WTC11 (cell line): ENCODE measurements at regions of chr7 and their contacts with region 1.

Region 1: GRCh38 chr7:127792528-127793342 is 140.7 kb downstream of the SND1 start:
- DNase-seq: peak; percentile 84
- ATAC-seq: peak; percentile 93
- H3K4me3 Mint-ChIP-seq: no peak overlapping the region
- H3K27ac Mint-ChIP-seq: peak overlapping the region; percentile 13
- H3K4me1 Mint-ChIP-seq: peaks cover 47% of the 10 kb centered on the region
- H3K27me3 Mint-ChIP-seq: no peaks in the 10 kb centered on the region
- CTCF ChIP-seq: peak; percentile 78

Region 2: GRCh38 chr7:127651556-127652332 is 141.0 kb before region 1 on chr7 and contains the start of gene SND1:
- CTCF ChIA-PET with region 1: no interaction called
- POLR2A ChIA-PET with region 1: no interaction called
- DNase-seq: peak; percentile 99
- ATAC-seq: peak; percentile 93
- H3K4me3 Mint-ChIP-seq: peak within 1 kb of the TSS; percentile 100; the same call in 1 of the 2 replicates
- H3K27ac Mint-ChIP-seq: peak within 1 kb of the TSS; percentile 97
- H3K4me1 Mint-ChIP-seq: peaks cover 35% of the 10 kb centered on the region
- H3K27me3 Mint-ChIP-seq: no peaks in the 10 kb centered on the region
- CTCF ChIP-seq: no peak
- total RNA-seq, gene SND1: 237 to 261 TPM (median 240 TPM) in 3 replicates

Region 3: GRCh38 chr7:127708788-127709187 is 83.9 kb before region 1 on chr7:
- CTCF ChIA-PET with region 1: interaction called, 14 read pairs
- POLR2A ChIA-PET with region 1: no interaction called
- DNase-seq: peak; percentile 76
- ATAC-seq: peak; percentile 84
- H3K4me3 Mint-ChIP-seq: no peak overlapping the region
- H3K27ac Mint-ChIP-seq: no peak overlapping the region
- H3K4me1 Mint-ChIP-seq: peaks cover 2% of the 10 kb centered on the region; the same call in 1 of the 2 replicates
- H3K27me3 Mint-ChIP-seq: no peaks in the 10 kb centered on the region; the same call in 1 of the 2 replicates
- CTCF ChIP-seq: peak; percentile 65

Region 4: GRCh38 chr7:127738859-127739258 is 53.9 kb before region 1 on chr7:
- CTCF ChIA-PET with region 1: interaction called, 14 read pairs
- POLR2A ChIA-PET with region 1: no interaction called
- DNase-seq: no peak
- ATAC-seq: no peak; the same call in 1 of the 2 replicates
- H3K4me3 Mint-ChIP-seq: no peak overlapping the region
- H3K27ac Mint-ChIP-seq: no peak overlapping the region
- H3K4me1 Mint-ChIP-seq: peaks cover 45% of the 10 kb centered on the region
- H3K27me3 Mint-ChIP-seq: no peaks in the 10 kb centered on the region
- CTCF ChIP-seq: no peak

Region 5: GRCh38 chr7:127766831-127767459 is 25.8 kb before region 1 on chr7:
- CTCF ChIA-PET with region 1: interaction called, 16 read pairs
- POLR2A ChIA-PET with region 1: no interaction called
- DNase-seq: no peak
- ATAC-seq: no peak
- H3K4me3 Mint-ChIP-seq: no peak overlapping the region
- H3K27ac Mint-ChIP-seq: peak overlapping the region; percentile 45; the same call in 1 of the 2 replicates
- H3K4me1 Mint-ChIP-seq: peaks cover 42% of the 10 kb centered on the region
- H3K27me3 Mint-ChIP-seq: no peaks in the 10 kb centered on the region
- CTCF ChIP-seq: no peak

Region 6: GRCh38 chr7:127816354-127817190 is 23.8 kb after region 1 on chr7:
- CTCF ChIA-PET with region 1: interaction called, 12 read pairs
- POLR2A ChIA-PET with region 1: no interaction called
- DNase-seq: no peak
- ATAC-seq: no peak
- H3K4me3 Mint-ChIP-seq: no peak overlapping the region
- H3K27ac Mint-ChIP-seq: no peak overlapping the region
- H3K4me1 Mint-ChIP-seq: peaks cover 75% of the 10 kb centered on the region
- H3K27me3 Mint-ChIP-seq: no peaks in the 10 kb centered on the region
- CTCF ChIP-seq: no peak

Region 7: DNA sequence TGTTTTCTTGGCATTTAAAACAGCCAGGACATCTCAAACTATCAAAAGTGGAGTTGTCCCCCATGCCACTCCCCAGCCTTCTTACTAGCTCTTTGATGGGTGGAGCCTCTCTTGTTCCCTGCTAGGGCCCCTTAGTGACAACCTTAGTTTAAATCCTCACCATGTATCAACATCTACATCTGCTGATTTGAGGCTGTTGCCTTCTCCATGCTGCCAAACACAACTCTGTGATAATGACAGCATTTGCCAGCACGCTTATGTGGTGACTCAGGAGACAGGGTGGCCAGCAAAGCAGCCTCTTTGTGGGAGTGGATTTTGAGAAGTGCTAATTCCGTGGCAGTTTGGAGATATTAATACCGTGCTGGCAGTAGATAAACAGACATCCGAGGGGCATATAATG is 93.1 kb after region 1 on chr7:
- CTCF ChIA-PET with region 1: no interaction called
- POLR2A ChIA-PET with region 1: no interaction called
- DNase-seq: no peak
- ATAC-seq: no peak; the same call in 1 of the 2 replicates
- H3K4me3 Mint-ChIP-seq: no peak overlapping the region
- H3K27ac Mint-ChIP-seq: peak overlapping the region; percentile 48
- H3K4me1 Mint-ChIP-seq: peaks cover 71% of the 10 kb centered on the region
- H3K27me3 Mint-ChIP-seq: no peaks in the 10 kb centered on the region
- CTCF ChIP-seq: no peak

Region 8: GRCh38 chr7:127905491-127906330 is 113.0 kb after region 1 on chr7:
- CTCF ChIA-PET with region 1: interaction called, 14 read pairs
- POLR2A ChIA-PET with region 1: no interaction called
- DNase-seq: no peak
- ATAC-seq: no peak
- H3K4me3 Mint-ChIP-seq: no peak overlapping the region
- H3K27ac Mint-ChIP-seq: no peak overlapping the region
- H3K4me1 Mint-ChIP-seq: peaks cover 55% of the 10 kb centered on the region
- H3K27me3 Mint-ChIP-seq: no peaks in the 10 kb centered on the region
- CTCF ChIP-seq: no peak

Region 9: GRCh38 chr7:127938588-127938987 is 145.9 kb after region 1 on chr7:
- CTCF ChIA-PET with region 1: no interaction called
- POLR2A ChIA-PET with region 1: no interaction called
- DNase-seq: no peak
- ATAC-seq: no peak
- H3K4me3 Mint-ChIP-seq: no peak overlapping the region
- H3K27ac Mint-ChIP-seq: no peak overlapping the region
- H3K4me1 Mint-ChIP-seq: peaks cover 37% of the 10 kb centered on the region
- H3K27me3 Mint-ChIP-seq: no peaks in the 10 kb centered on the region
- CTCF ChIP-seq: no peak